ENCODE measurements at regions of chr5 and their contacts with region 1.

Region 1: DNA sequence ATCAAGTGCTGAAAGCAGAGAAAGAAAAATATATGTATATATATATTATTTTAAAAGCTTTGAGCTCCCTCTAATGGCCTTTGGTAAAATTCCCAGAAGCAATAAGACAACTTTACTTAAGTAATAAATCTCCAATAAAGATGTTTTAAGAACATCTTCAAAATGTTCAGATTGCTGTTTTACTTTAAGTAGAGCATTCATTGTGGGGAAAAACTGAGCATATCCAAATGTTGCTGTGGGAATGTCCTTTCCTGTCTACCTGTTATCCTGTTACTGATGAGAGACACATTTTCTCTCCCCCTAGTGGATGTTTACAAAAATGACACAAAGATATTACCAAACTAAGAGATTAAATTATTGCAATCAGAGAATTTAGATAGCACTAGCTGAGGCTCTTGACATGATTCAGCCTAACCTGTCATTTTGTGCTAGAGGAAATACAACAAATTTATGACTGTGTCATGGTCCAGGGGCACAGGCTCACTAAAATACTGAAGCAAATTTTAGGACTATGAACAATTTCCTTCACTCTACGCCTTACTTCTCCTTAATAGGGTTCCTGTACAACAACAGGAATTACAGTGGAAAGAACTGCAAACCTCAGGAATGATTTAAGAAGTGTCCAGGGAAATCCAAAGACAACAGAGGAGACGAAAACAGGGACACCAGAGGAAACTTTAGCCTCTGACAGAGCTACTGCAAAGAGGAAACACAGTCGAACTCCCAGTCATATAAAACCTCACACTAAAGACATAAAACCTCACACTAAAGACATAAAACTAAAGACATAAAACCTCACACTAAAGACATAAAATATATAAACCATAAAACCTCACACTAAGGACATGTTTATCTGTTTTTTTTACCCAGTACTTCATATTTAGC is 24.3 kb upstream of the PRRC1 start:
- DNase-seq: peak; percentile 78
- H3K4me3 ChIP-seq: no peak overlapping the region
- H3K27ac ChIP-seq: no peak overlapping the region
- H3K4me1 ChIP-seq: no peaks in the 10 kb centered on the region
- H3K27me3 ChIP-seq: peaks cover 6 to 31% of the 10 kb centered on the region in 2 experiments
- CTCF ChIP-seq: peak; percentile 47 to 54
- POLR2A ChIP-seq: no peak

Region 2: GRCh38 chr5:126656396-126657007 is 836.6 kb before region 1 on chr5:
- CTCF ChIA-PET with region 1: interaction called, 10 read pairs
- POLR2A ChIA-PET with region 1: no interaction called
- dilution Hi-C with region 1: no loop called
- intact Hi-C with region 1: loop called (anchors 2 kb)
- DNase-seq: peak; percentile 47
- H3K4me3 ChIP-seq: no peak overlapping the region
- H3K27ac ChIP-seq: no peak overlapping the region
- H3K4me1 ChIP-seq: no peaks in the 10 kb centered on the region
- H3K27me3 ChIP-seq: no peaks in the 10 kb centered on the region
- CTCF ChIP-seq: peak; percentile 61 to 62
- POLR2A ChIP-seq: no peak

Region 3: GRCh38 chr5:126837906-126838539 is 655.1 kb before region 1 on chr5:
- CTCF ChIA-PET with region 1: interaction called, 51 read pairs
- POLR2A ChIA-PET with region 1: no interaction called
- dilution Hi-C with region 1: no loop called
- intact Hi-C with region 1: loop called (anchors 5 kb)
- DNase-seq: peak; percentile 54
- H3K4me3 ChIP-seq: no peak overlapping the region
- H3K27ac ChIP-seq: no peak overlapping the region
- H3K4me1 ChIP-seq: no peaks in the 10 kb centered on the region
- H3K27me3 ChIP-seq: no peaks in the 10 kb centered on the region
- CTCF ChIP-seq: peak; percentile 8 to 34
- POLR2A ChIP-seq: no peak

Region 4: DNA sequence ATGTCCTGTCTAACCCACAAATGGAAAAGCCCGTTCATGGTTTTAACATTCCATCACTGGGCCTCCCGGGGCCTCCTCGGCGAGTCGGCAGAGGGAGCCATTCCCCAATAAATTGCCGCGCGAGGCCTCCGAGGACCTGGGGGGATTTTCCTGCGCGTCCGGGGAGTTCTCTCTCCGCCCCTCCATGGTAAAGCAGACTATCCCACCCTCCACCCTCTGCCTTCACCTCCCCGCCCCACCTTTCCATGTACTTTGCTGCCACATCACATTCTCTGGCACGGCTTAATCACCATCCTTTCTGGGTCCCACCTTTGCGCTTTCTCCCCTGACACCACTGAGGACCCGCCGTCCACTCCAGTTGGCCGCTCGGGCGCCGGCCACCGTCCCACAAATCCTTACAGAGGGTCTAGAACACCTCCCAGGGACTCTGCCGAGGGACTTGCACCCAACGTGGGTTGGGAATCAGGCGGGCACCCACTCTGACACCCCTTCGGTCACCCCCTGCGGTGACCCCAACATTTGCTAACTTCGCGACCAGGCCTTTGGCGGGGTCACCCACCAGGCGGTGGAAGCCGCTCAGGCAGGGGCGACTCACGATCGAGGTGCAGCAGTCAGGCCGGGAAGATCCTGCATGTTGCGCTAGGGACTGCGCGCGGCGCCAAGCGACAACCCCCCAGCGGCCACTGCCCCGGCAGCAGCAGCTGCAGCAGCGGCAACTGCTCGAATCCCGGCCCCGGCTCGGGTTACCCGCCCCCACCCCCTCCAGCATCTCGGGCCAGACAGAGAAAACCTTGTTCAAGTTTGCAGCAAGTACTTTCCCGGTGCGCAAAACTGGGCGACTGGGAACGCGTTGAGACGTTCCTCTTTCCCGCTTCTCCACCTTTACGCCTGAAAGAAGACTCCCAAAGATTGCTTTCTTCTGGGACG is 202.8 kb before region 1 on chr5 and contains the start of gene MEGF10:
- CTCF ChIA-PET with region 1: interaction called, 12 read pairs
- POLR2A ChIA-PET with region 1: no interaction called
- dilution Hi-C with region 1: no loop called
- intact Hi-C with region 1: loop called (anchors 1 kb)
- DNase-seq: peak; percentile 33
- H3K4me3 ChIP-seq: peak within 1 kb of the TSS; percentile 8 to 46 (median 28)
- H3K27ac ChIP-seq: no peak within 1 kb of the TSS
- H3K4me1 ChIP-seq: peaks cover 17% of the 10 kb centered on the region
- H3K27me3 ChIP-seq: peaks cover 26 to 47% of the 10 kb centered on the region in 2 experiments
- CTCF ChIP-seq: peak; percentile 66 to 71
- POLR2A ChIP-seq: no peak
- total RNA-seq, gene MEGF10: 0.21 and 1.00 TPM in 2 replicates

Region 5: DNA sequence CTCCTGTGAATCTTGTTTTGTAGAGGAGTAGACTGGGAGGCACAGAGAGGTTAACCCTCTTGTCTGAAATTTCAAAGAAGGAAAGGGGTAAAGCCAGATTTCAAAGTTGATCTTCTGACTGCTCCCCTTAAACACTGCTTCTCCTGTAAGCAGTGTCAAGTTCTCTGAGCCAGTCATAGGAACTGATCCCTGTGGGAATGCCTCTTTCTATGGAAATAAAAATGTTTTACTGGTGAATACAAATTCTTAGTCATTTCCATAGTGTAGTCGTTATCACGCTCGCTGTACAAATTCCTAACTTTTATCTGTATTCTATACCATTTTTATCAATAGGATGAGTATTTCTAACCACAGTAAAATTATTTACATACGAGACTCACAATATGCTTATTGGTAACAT is 42.0 kb before region 1 on chr5:
- CTCF ChIA-PET with region 1: interaction called, 11 read pairs
- POLR2A ChIA-PET with region 1: no interaction called
- dilution Hi-C with region 1: no loop called
- intact Hi-C with region 1: no loop called
- DNase-seq: no peak
- H3K4me3 ChIP-seq: no peak overlapping the region
- H3K27ac ChIP-seq: no peak overlapping the region
- H3K4me1 ChIP-seq: no peaks in the 10 kb centered on the region
- H3K27me3 ChIP-seq: peaks cover 0 to 4% of the 10 kb centered on the region in 2 experiments
- CTCF ChIP-seq: no peak
- POLR2A ChIP-seq: no peak

Region 6: DNA sequence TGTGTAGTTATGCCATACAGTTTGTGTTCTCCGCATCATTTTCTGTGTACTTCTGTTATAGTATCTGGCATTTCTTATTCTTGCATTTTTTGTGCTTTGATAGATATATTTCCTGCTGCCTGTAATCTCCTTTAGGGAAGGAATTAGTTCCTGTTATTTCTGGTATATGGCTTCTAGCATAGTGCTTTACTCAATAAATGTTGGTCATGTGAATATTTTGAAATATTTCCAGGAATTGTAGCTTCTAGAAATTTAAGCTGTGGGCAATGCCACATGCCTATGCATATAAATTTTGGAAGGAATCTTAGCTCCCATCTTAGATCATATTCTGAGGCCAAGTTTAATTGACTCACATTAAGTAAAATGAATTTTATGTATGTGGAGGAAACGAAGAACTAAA is 12.8 kb after region 1 on chr5:
- CTCF ChIA-PET with region 1: interaction called, 33 read pairs
- POLR2A ChIA-PET with region 1: no interaction called
- dilution Hi-C with region 1: no loop called
- intact Hi-C with region 1: no loop called
- DNase-seq: no peak
- H3K4me3 ChIP-seq: no peak overlapping the region
- H3K27ac ChIP-seq: no peak overlapping the region
- H3K4me1 ChIP-seq: no peaks in the 10 kb centered on the region
- H3K27me3 ChIP-seq: peaks cover 20 to 26% of the 10 kb centered on the region in 2 experiments
- CTCF ChIP-seq: no peak
- POLR2A ChIP-seq: no peak